Right ventricle myocardium superior (tissue), 1 donor: ENCODE measurements at regions of chr10 and their contacts with region 1.

Region 1: GRCh38 chr10:6401562-6402348 is 178.3 kb downstream of the PRKCQ start:
- DNase-seq: peak; percentile 72
- ATAC-seq: peak; percentile 98

Region 2: GRCh38 chr10:6014241-6014761 is 387.5 kb before region 1 on chr10:
- intact Hi-C with region 1: loop called (anchors 5 kb)
- DNase-seq: no peak
- ATAC-seq: peak; percentile 61

Region 3: GRCh38 chr10:6088721-6089390 is 312.9 kb before region 1 on chr10 and contains the start of gene RBM17:
- intact Hi-C with region 1: loop called (anchors 5 kb)
- DNase-seq: peak; percentile 97
- ATAC-seq: peak; percentile 94
- total RNA-seq, gene RBM17: 64.3 TPM

Region 4: DNA sequence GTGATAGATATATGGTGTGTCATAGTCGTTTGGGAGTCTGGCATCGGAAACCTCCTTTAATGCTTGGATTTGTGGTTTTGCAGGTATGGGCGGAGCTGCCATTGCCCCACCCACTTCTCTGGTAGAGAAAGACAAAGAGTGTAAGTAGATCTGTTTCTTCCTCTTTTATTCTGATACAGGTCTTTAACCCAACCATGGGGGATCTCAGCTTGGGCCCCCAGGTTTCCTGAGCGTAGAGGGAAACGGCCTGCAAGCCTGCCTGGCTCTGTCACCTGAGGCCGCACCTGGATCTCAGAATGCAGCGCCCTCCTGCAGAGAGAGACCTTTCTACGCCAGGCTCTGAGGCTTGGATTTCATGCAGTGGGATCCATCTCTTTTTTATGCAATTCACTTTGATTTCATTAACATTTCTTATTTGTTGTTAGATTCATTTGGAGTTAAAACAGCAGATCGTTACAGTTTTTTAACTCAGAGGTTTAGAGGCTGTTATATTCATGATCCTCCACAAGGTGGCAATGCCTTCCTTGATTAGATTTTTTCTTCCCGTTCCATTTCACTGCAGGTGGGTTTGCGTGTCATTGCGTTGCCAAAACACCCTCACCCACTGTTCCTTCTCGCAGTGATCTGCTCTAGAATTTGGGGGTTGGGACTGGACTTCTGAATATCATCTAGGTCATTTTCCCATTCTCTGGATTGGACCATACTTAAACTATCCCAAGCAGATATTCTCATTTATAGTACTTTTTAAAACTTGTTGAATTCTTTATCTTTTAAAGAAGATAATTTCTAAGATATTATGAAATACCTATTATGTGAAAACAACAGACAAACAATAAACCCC is 292.9 kb before region 1 on chr10:
- intact Hi-C with region 1: loop called (anchors 5 kb)
- DNase-seq: no peak
- ATAC-seq: peak; percentile 52

Region 5: DNA sequence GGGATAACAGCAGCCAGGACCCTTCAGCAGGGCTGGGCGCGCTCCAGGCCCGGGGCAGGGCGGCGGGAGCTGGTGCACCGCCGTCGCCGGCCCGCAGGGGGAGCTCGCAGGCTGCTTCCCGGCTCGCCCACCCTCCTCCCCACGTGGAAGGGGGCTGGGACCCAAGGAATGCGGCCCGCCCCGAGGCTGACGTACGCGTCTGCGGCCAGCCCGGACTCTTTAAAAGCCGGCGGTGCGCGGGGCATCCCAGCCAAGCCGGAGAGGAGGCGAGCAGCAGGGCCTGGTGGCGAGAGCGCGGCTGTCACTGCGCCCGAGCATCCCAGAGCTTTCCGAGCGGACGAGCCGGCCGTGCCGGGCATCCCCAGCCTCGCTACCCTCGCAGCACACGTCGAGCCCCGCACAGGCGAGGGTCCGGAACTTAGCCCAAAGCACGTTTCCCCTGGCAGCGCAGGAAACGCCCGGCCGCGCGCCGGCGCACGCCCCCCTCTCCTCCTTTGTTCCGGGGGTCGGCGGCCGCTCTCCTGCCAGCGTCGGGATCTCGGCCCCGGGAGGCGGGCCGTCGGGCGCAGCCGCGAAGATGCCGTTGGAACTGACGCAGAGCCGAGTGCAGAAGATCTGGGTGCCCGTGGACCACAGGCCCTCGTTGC is 198.9 kb before region 1 on chr10 and contains the start of gene PFKFB3:
- intact Hi-C with region 1: loop called (anchors 2 kb)
- DNase-seq: peak; percentile 98
- ATAC-seq: peak; percentile 92
- total RNA-seq, gene PFKFB3: 24.7 TPM